Heart right ventricle (tissue), 16 donors: ENCODE measurements at regions of chr10 and their contacts with region 1.

Region 1: DNA sequence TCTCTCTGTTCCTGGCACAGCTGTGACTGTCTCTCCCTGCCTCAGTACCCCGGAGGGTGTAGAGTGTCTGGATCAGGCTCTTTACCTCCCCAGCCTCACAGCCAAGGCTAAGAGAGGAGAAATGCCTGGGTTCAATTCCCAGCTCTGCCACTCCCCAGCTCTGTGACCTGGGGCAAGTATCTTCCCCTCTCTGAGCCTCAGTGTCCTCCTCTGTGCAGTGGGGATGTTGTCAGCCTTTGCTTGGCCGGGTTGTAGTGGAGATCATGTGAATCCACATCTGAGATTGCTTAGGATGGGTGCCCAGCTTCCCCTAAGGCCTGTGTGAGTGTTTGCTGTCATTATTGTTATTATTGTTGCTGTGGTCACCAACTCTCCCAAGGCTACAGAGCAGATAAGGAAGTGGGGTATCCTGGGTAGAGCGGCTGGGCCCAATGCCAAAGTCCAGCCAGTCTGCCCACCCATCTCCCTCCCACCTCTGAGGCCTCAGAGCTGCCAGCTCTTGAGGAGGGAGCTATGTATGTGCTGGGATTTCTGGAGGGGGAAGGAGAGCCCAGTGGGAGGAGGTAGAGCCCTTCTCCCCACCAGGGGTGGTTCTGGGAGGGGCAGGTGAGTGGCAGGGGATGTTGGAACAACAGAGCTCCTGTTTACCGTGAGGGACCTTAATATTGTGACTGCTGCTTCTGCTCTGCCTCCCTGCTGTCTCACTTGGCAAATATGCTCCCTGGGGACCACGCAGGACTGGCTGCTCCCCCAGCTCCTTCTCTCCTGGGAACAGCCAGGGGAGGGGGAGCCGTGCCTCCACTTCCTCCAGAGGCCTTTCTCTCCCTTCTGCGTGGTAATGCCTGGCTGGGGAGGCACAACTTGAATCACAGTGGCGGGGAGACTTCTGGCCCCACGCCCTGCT is 170.5 kb downstream of the RPS24 start:
- DNase-seq: peak; percentile 71 to 73
- ATAC-seq: peak; percentile 86 to 97 (median 92)
- H3K4me3 ChIP-seq: no peak overlapping the region
- H3K27ac ChIP-seq: peak overlapping the region in 1 of 10 donors; percentile 44
- H3K4me1 ChIP-seq: peaks cover 0 to 11% (median 5%) of the 10 kb centered on the region in 9 donors
- H3K27me3 ChIP-seq: no peaks in the 10 kb centered on the region
- CTCF ChIP-seq: no peak

Region 2: GRCh38 chr10:78416111-78417011 is 212.2 kb after region 1 on chr10:
- intact Hi-C with region 1: loop called in 1 of 10 experiments (anchors 10 kb)
- DNase-seq: no peak
- ATAC-seq: peak in 1 of 8 donors; percentile 41
- H3K4me3 ChIP-seq: no peak overlapping the region
- H3K27ac ChIP-seq: no peak overlapping the region
- H3K4me1 ChIP-seq: peaks cover 0 to 6% (median 0%) of the 10 kb centered on the region in 9 donors
- H3K27me3 ChIP-seq: no peaks in the 10 kb centered on the region
- CTCF ChIP-seq: no peak